Panc1 (cell line): ENCODE measurements at regions of chr5 and their contacts with region 1.

Region 1: DNA sequence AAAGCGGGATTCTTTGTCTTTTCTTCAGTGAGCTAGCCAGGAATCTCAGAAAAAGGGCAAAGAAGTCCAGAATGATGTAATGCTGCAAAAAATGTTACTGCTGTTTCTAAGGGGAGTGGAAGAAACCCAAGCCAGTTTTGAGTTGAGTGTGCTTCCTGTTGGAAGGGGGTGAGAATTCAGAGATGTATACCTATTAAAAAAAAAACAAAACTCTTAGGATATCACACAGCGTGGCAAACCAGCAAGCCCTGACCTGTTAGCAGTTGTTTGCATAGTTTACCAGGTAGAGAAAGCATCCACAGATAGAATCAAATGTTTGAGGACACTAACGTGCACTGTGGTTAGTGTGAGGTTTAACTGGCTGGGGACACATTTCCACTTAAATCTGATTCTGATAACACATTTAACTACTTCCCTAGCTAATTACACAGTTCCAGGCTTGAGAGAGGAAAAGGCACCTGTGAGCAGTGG is 11.4 kb downstream of the BASP1 start:
- DNase-seq: no peak
- ATAC-seq: no peak
- H3K4me3 ChIP-seq: no peak overlapping the region
- H3K27ac ChIP-seq: no peak overlapping the region
- H3K4me1 ChIP-seq: peaks cover 59% of the 10 kb centered on the region
- H3K27me3 ChIP-seq: no peaks in the 10 kb centered on the region
- CTCF ChIP-seq: no peak

Region 2: GRCh38 chr5:15914638-15915037 is 1314.2 kb before region 1 on chr5:
- CTCF ChIA-PET with region 1: no interaction called
- POLR2A ChIA-PET with region 1: no interaction called
- in situ Hi-C with region 1: no loop called
- intact Hi-C with region 1: no loop called
- DNase-seq: no peak
- ATAC-seq: no peak
- H3K4me3 ChIP-seq: peak overlapping the region in 1 of 2 experiments; percentile 31; a peak in 2 of 4 replicates
- H3K27ac ChIP-seq: no peak overlapping the region
- H3K4me1 ChIP-seq: no peaks in the 10 kb centered on the region
- H3K27me3 ChIP-seq: no peaks in the 10 kb centered on the region
- CTCF ChIP-seq: no peak

Region 3: GRCh38 chr5:17276445-17276844 is 47.6 kb after region 1 on chr5:
- CTCF ChIA-PET with region 1: no interaction called
- POLR2A ChIA-PET with region 1: no interaction called
- in situ Hi-C with region 1: no loop called
- intact Hi-C with region 1: loop called (anchors 10 kb)
- DNase-seq: no peak
- ATAC-seq: no peak
- H3K4me3 ChIP-seq: no peak overlapping the region
- H3K27ac ChIP-seq: no peak overlapping the region
- H3K4me1 ChIP-seq: no peaks in the 10 kb centered on the region
- H3K27me3 ChIP-seq: no peaks in the 10 kb centered on the region
- CTCF ChIP-seq: no peak